Activated naive CD4-positive, alpha-beta T cell treated with anti-CD3 and anti-CD28 coated beads for 36 hours (primary cell): ENCODE measurements at regions of chr18 and their contacts with region 1.

Region 1: DNA sequence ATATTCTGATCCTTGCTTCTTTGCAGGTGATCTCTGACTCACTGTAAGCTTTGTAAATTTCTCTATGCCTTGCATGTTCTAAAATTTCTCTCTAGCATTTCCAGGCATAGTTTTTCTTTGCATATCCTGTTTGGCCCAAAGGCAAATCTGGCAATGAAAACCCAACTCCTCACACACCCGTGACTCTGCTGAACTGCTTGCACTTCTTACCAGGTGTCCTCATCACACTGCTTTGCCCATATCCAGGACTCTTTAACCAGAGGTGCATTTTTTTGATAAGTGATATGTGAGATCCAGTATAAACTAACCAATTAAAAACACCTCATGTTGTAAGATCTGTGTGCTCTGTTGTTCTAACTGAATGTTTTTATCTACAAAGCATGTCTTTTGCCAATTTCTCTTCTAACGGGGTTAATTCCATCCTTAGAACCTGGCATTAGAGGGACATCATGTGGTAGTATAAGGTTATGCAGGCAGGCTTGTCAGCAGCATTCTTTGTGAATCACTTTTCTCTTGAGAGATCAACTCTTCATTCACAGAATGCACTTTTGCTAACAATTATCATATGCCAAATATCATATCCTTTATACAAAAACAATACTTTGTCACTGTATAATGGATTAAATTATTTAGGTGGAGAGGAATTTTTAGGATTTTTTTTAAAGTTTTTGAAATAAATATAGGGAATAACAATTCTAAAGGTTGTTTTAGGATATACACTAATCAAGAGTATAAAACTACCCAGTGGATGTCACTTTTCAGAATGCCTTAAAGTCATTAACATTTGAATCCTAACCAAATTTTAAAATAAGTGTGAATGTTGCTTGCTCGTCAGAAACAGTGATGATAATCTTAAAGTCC is 20.8 kb upstream of the TMX3 start:
- DNase-seq: peak; percentile 11
- H3K4me3 Mint-ChIP-seq: no peak overlapping the region
- H3K27ac Mint-ChIP-seq: no peak overlapping the region
- H3K4me1 Mint-ChIP-seq: no peaks in the 10 kb centered on the region
- H3K27me3 Mint-ChIP-seq: no peaks in the 10 kb centered on the region

Region 2: DNA sequence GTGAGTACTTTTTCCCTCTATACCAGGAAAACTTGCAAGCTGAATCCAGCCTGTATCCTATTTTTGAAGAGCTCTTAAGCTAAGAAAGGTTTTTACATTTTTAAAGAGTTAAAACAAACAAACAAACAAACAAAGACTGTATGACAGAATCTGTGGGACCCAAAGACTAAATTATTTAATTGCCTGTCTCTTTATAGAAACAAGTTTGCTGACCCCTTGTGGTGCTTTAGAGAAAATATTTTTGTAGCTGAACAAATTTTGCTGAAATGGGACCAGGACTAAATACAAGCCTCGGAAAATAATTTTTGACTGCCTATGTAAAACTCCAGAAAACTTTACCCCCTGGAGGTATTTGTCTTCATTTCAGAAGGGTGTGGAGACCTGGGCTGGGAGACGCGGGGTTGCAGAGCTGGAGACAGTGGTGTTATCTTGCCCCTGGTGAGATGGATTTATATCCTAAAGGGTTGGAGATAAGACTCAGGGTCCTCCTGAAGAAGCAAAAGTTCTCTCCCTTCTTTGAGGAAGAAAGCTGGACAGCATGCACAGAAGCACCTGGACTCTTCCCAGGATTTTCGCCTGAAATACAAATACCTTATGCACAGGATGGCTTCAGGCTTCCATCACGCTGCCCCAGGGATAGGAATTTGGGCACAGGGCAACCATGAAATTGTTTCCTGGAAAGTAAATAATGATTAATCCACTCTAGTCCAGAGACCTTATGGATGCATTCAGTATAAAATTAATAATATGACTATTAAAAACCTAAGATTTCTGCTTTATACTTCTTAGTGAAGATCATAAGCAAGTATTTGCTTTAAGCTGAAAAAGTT is 75.1 kb before region 1 on chr18:
- CTCF ChIA-PET with region 1: interaction called, 3 read pairs
- intact Hi-C with region 1: loop called (anchors 1 kb)
- DNase-seq: no peak
- H3K4me3 Mint-ChIP-seq: no peak overlapping the region
- H3K27ac Mint-ChIP-seq: no peak overlapping the region
- H3K4me1 Mint-ChIP-seq: no peaks in the 10 kb centered on the region
- H3K27me3 Mint-ChIP-seq: no peaks in the 10 kb centered on the region